Activated CD8-positive, alpha-beta T cell treated with anti-CD3 and anti-CD28 coated beads, Interleukin-2, amount 10 ng/mL, durations not matched to agents 7 days and 5 days (primary cell): ENCODE measurements at regions of chr22 and their contacts with region 1.

Region 1: GRCh38 chr22:20456064-20456721 is 18.6 kb upstream of the SCARF2 start:
- DNase-seq: peak; percentile 83
- ATAC-seq: peak; percentile 88
- H3K4me3 Mint-ChIP-seq: no peak overlapping the region
- H3K27ac Mint-ChIP-seq: peak overlapping the region; percentile 46
- H3K4me1 Mint-ChIP-seq: peaks cover 19% of the 10 kb centered on the region
- H3K27me3 Mint-ChIP-seq: no peaks in the 10 kb centered on the region

Region 2: GRCh38 chr22:20418211-20418788 is 37.9 kb before region 1 on chr22:
- CTCF ChIA-PET with region 1: interaction called, 65 read pairs
- POLR2A ChIA-PET with region 1: interaction called, 3 read pairs
- DNase-seq: peak; percentile 80
- ATAC-seq: peak; percentile 87
- H3K4me3 Mint-ChIP-seq: peak overlapping the region; percentile 44
- H3K27ac Mint-ChIP-seq: no peak overlapping the region
- H3K4me1 Mint-ChIP-seq: peaks cover 5% of the 10 kb centered on the region
- H3K27me3 Mint-ChIP-seq: peaks cover 2% of the 10 kb centered on the region

Region 3: GRCh38 chr22:20430720-20431510 is 25.3 kb before region 1 on chr22:
- CTCF ChIA-PET with region 1: interaction called, 16 read pairs
- POLR2A ChIA-PET with region 1: interaction called, 3 read pairs
- DNase-seq: peak; percentile 62
- ATAC-seq: peak; percentile 48
- H3K4me3 Mint-ChIP-seq: peak overlapping the region; percentile 52
- H3K27ac Mint-ChIP-seq: no peak overlapping the region
- H3K4me1 Mint-ChIP-seq: peaks cover 19% of the 10 kb centered on the region
- H3K27me3 Mint-ChIP-seq: peaks cover 72% of the 10 kb centered on the region

Region 4: DNA sequence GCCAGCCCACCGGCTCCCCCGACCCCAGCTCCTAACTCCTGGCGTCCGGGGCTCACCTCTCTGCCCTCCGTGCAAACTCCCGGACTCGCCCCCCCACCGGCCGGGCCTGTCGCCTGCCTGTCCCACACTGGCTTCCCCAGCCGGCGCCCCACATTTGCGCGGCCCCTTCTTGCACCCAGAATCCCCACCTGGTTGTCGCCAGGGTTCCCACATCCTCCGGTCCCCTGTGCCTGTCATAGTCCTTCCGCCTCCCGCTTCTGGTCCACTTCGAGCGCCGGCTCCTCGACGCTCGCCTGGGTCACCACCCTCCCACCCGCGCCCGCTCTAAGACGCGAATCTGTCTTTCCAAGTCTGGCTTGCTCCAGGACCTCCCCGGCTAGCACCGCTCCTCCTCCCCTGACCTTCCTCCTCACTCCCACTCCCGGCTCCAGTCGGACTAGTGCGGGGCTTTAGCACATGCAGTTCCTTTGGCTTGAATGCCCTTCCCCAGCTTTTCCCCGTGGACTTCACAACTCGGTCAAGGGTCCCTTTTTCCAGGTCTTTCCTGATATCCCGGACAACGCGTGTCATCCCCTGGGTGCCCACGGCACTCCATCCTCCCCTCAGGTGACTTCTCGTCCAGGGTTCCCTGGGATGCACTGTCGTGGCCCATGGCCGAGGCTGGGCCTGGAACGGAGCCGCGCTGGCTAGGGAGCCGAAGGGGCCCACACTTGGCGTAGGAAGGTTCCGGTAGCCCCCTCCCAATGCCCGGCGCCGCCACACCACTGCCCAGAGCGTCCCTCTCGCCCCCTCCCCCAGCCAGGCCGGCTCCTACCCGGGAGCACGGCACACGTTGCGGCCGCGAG is 19.2 kb before region 1 on chr22:
- CTCF ChIA-PET with region 1: interaction called, 13 read pairs
- POLR2A ChIA-PET with region 1: no interaction called
- DNase-seq: no peak
- ATAC-seq: peak; percentile 7
- H3K4me3 Mint-ChIP-seq: peak overlapping the region; percentile 1
- H3K27ac Mint-ChIP-seq: no peak overlapping the region
- H3K4me1 Mint-ChIP-seq: peaks cover 17% of the 10 kb centered on the region
- H3K27me3 Mint-ChIP-seq: peaks cover 58% of the 10 kb centered on the region

Region 5: GRCh38 chr22:20469110-20469868 is 13.1 kb after region 1 on chr22:
- CTCF ChIA-PET with region 1: interaction called, 13 read pairs
- POLR2A ChIA-PET with region 1: no interaction called
- DNase-seq: no peak
- ATAC-seq: no peak
- H3K4me3 Mint-ChIP-seq: no peak overlapping the region
- H3K27ac Mint-ChIP-seq: peak overlapping the region; percentile 56
- H3K4me1 Mint-ChIP-seq: peaks cover 29% of the 10 kb centered on the region
- H3K27me3 Mint-ChIP-seq: no peaks in the 10 kb centered on the region

Region 6: DNA sequence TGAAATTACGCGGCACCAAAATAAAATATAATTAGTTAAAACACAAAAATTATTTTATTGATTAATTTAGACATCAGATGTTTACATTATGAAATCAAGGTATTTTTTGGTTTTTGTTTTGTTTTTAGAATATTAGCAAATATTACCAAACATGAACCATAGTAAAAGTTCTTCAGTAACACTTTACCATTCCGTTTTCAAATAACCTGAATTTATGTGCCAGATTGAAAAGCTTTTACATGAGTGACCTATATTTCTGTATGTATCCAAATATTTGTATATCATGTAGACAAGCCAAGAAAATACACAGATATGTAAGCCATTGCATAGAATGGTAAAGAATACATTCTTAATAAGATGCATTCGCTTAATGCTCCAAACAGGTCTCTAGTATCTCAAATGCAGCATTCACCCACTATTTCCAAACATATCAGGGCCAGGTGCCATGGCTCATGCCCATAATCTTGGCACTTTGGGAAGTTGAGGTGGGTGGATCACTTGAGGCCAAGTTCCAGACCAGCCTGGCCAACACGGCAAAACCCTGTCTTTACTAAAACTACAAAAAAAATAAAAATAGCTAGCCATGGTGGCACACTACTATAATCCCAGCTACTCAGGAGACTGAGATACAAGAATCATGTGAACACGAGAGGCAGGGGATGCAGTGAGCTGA is 215.4 kb after region 1 on chr22:
- CTCF ChIA-PET with region 1: no interaction called
- POLR2A ChIA-PET with region 1: no interaction called
- DNase-seq: no peak
- ATAC-seq: no peak
- H3K4me3 Mint-ChIP-seq: no peak overlapping the region
- H3K27ac Mint-ChIP-seq: no peak overlapping the region
- H3K4me1 Mint-ChIP-seq: no peaks in the 10 kb centered on the region
- H3K27me3 Mint-ChIP-seq: peaks cover 32% of the 10 kb centered on the region